ENCODE measurements at regions of chr2 and their contacts with region 1.

Region 1: DNA sequence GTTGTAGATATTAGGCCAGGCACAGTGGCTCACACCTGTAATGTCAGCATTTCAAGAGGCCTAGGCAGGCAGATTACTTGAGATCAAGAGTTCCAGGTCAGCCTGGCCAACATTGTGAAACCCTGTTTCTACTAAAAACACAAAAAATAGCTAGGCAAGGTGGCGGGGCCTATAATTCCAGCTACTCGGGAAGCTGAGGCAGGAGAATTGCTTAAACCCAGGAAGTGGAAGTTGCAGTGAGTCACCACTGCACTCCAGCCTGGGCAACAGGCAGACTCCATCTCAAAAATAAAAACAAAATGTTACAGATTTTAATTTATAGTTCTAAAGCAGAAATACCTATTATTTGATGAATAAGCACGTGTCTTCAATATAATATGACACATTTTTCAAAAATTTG is 65.6 kb upstream of the UBXN4 start:
- DNase-seq: no peak
- ATAC-seq: no peak
- H3K4me3 Mint-ChIP-seq: no peak overlapping the region
- H3K27ac Mint-ChIP-seq: no peak overlapping the region
- H3K4me1 Mint-ChIP-seq: no peaks in the 10 kb centered on the region
- H3K27me3 Mint-ChIP-seq: no peaks in the 10 kb centered on the region

Region 2: GRCh38 chr2:134336352-134336751 is 1339.7 kb before region 1 on chr2:
- CTCF ChIA-PET with region 1: no interaction called
- POLR2A ChIA-PET with region 1: no interaction called
- intact Hi-C with region 1: no loop called
- DNase-seq: no peak
- ATAC-seq: no peak
- H3K4me3 Mint-ChIP-seq: no peak overlapping the region
- H3K27ac Mint-ChIP-seq: no peak overlapping the region
- H3K4me1 Mint-ChIP-seq: peaks cover 7% of the 10 kb centered on the region
- H3K27me3 Mint-ChIP-seq: no peaks in the 10 kb centered on the region

Region 3: DNA sequence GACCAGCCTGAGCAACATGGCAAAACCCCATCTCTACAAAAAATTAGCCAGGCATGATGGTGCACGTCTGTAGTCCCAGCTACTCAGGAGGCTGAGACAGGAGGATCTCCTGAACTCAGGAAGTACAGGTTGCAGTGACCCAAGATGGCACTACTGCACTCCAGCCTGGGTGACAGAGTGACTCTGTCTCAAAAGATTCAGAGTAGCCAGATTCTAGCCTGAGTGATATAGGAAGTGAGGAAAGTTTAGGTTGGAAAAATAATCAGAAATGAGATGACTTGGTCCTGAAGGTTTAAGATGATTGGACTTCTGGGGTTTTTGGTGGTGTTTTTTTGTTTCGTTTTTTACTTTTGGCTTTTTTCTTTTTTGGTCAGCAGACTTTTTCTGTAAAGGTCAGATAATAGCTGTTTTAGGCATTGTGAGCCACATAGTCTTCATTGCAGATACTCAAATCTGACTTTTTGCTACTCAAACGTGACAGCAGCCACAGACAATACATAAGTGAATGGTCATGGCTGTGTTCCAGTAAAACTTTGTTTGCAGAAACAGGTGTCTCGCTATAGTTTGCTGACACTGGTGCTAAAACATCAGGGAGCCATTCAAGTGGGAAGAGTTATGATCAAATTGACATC is 38.5 kb before region 1 on chr2:
- CTCF ChIA-PET with region 1: no interaction called
- POLR2A ChIA-PET with region 1: no interaction called
- intact Hi-C with region 1: no loop called
- DNase-seq: peak; percentile 7
- ATAC-seq: peak; percentile 85
- H3K4me3 Mint-ChIP-seq: no peak overlapping the region
- H3K27ac Mint-ChIP-seq: peak overlapping the region; percentile 49
- H3K4me1 Mint-ChIP-seq: peaks cover 11% of the 10 kb centered on the region
- H3K27me3 Mint-ChIP-seq: no peaks in the 10 kb centered on the region

Region 4: DNA sequence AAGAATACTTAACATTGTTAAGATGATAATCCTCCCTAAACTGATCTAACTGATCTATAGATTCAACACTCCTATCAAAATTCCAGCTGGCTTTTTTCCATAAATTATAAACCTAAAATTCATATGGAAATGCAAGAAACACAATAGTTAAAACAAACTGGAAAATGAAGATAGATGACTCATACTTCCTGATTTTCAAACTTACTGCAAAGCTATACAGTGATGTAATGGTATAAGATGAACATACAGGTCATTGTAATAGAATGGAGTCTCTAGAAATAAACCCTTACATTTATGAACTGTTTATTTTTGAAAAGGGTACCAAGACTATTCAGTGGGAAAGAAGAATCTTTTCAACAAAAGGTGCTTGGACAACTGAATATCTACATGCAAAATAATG is 97.9 kb after region 1 on chr2:
- CTCF ChIA-PET with region 1: no interaction called
- POLR2A ChIA-PET with region 1: interaction called, 12 read pairs
- intact Hi-C with region 1: no loop called
- DNase-seq: no peak
- ATAC-seq: no peak
- H3K4me3 Mint-ChIP-seq: no peak overlapping the region
- H3K27ac Mint-ChIP-seq: no peak overlapping the region
- H3K4me1 Mint-ChIP-seq: peaks cover 8% of the 10 kb centered on the region
- H3K27me3 Mint-ChIP-seq: no peaks in the 10 kb centered on the region